Activated naive CD4-positive, alpha-beta T cell treated with anti-CD3 and anti-CD28 coated beads for 36 hours (primary cell): ENCODE measurements at regions of chr3 and their contacts with region 1.

Region 1: DNA sequence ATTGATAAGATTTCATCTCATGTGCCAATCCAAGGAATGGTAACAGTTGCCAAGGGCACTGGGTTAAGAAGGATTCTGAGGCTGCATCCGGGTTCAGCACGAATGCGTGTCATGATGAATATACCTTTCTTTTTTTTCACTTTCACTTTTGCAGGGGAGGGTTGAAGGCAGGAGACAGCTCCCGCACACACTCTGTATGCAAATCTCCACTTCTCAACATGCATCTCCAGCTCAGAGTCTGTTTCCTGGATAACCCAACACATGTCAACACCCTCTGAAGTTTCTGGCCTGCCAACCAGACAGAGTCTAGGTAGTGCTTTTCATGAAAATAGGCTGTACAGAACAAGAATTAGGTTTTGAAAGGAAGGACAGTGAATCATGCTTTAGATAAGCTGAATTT is 21.6 kb downstream of the B4GALT4 start:
- DNase-seq: peak; percentile 78
- H3K4me3 Mint-ChIP-seq: peak overlapping the region; percentile 63
- H3K27ac Mint-ChIP-seq: peak overlapping the region; percentile 94
- H3K4me1 Mint-ChIP-seq: peaks cover 74% of the 10 kb centered on the region
- H3K27me3 Mint-ChIP-seq: no peaks in the 10 kb centered on the region

Region 2: DNA sequence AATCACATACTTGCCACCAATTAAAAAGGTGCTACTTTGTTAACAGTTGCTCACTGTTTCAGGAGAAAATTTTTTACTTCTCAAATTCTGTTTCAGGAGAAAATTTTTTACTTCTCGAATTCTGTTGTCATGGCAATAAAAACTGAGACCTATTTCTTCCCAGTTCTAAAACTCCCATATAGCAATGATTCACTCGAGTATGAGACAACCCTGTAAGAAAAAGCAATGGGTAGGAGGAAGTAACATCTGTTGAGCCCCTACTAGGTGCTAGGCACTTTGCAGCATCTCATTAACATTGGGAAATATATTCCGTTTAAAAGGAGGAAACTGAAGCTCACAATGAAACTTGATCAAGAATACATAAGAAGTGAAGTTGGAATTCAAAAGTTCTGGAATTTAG is 149.3 kb before region 1 on chr3:
- CTCF ChIA-PET with region 1: no interaction called
- intact Hi-C with region 1: no loop called
- DNase-seq: no peak
- H3K4me3 Mint-ChIP-seq: no peak overlapping the region
- H3K27ac Mint-ChIP-seq: no peak overlapping the region
- H3K4me1 Mint-ChIP-seq: no peaks in the 10 kb centered on the region
- H3K27me3 Mint-ChIP-seq: peaks cover 6% of the 10 kb centered on the region

Region 3: DNA sequence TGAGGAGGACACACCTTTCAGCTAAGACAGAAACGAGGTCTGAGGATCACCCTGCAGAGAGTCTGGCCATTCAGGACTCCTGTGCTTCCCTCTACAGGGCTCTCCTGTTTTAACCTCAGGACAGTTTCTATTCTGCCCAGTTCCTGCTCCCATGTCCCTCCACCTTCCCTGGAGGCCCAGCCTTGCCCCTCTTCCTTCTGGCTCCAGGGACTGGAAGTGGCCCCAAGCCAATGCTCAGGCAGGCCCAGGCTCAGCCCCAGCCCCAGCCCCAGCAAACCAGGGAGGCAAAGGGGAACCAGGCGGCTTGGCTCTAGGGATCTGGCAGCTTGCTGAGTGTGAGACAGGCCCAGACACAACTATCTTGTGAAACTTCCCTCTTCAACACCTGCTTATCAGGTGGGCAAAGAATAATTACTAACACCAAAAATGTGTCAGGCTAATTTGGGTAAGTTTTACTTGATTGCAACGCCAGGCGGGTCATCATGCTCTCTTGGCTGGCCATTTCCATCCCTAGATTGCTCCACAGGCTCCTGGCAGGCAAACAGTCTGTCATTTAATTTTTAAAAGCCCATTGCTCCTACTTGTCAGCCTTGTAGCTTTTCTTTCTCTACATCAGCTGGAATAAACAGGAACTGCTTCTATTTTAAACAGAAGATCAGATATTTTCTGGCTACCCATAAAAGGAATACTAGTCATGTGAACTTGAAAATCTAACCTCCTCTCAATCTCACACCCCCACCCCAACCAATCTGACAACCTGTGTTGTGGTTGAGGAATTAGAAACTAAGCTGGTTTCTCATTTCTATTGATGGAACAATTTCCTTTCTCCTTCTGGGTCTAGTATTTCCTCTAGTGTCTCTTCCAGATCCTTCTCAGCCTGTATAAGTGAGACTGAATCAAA is 12.2 kb before region 1 on chr3:
- CTCF ChIA-PET with region 1: interaction called, 3 read pairs
- intact Hi-C with region 1: loop called (anchors 1 kb)
- DNase-seq: peak; percentile 44
- H3K4me3 Mint-ChIP-seq: no peak overlapping the region
- H3K27ac Mint-ChIP-seq: no peak overlapping the region
- H3K4me1 Mint-ChIP-seq: peaks cover 56% of the 10 kb centered on the region
- H3K27me3 Mint-ChIP-seq: no peaks in the 10 kb centered on the region

Region 4: DNA sequence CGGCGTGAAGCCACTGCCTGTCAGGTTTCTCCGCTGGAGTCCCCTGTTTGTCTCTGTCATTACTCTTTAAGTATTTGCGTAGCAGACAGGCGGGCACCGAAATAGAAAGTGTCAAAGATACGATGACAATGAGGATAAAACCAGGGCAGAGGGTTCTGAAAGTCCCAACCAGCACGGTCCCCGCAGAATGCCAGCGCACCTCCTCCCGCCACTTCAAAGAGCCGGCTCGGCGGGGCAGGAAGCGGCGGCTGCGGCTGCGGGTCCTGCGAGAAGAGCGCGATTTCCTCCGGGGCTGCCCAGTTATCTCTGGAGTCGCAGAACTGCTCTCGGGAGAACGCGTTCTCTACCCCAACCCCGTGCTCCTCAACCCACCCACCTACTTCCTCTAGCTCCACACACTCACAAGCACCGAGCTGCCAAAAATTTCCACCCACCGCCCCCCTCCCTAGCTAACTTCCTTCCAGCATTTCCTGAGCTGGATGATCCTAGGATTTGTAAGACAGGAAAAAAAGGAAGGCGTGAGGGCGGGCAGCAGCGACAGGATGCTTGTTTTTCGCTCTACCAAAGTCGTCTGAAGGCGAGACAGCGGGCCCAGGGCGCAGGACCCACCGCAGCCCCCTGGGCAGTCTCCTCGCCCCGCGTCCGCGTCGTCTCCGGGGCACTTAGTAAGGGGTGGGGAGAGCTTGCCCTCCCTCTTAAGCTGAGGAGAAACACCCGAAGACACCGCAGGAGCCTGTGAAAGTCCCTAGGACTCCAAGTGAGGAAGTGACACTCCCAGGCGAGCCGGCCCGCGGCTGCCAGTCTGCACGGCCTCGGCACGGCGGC is 75.0 kb after region 1 on chr3 and contains the start of gene ARHGAP31:
- CTCF ChIA-PET with region 1: no interaction called
- intact Hi-C with region 1: loop called (anchors 1 kb)
- DNase-seq: peak; percentile 94
- H3K4me3 Mint-ChIP-seq: peak within 1 kb of the TSS; percentile 82
- H3K27ac Mint-ChIP-seq: peak within 1 kb of the TSS; percentile 92
- H3K4me1 Mint-ChIP-seq: peaks cover 36% of the 10 kb centered on the region
- H3K27me3 Mint-ChIP-seq: no peaks in the 10 kb centered on the region
- total RNA-seq, gene ARHGAP31: 3.5 to 3.7 TPM

Region 5: DNA sequence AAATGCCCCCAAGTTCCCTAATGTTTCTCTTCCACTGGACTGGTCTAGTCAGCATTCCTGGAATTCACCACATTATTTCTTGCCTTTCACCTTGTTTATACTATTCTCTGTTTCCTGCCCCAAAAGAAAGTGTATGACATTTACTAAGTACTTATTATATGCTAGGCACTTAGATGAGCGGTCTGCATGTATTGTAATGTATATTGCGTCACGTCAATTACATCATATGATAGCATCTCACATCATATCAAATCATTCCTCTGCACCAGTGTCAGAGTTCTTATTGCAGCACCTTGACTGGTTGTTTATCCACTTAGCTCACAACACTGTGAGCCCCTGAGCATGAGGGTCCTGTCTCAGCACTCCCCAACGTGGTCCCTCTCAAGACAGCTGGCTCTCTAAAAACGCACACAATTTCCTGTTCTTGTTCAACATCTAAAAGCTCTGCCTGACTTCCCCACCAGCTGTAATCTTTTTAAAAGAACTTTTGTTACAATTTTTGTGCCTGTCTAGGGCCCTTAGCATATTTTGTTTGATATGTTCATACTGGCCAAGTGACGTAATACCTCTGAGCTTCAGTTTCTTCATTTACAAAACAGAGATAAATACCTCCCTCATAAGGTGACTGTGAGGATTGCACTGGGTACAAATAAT is 133.9 kb after region 1 on chr3:
- CTCF ChIA-PET with region 1: no interaction called
- intact Hi-C with region 1: loop called (anchors 1 kb)
- DNase-seq: peak; percentile 13
- H3K4me3 Mint-ChIP-seq: no peak overlapping the region
- H3K27ac Mint-ChIP-seq: peak overlapping the region; percentile 43
- H3K4me1 Mint-ChIP-seq: peaks cover 30% of the 10 kb centered on the region
- H3K27me3 Mint-ChIP-seq: no peaks in the 10 kb centered on the region

Region 6: DNA sequence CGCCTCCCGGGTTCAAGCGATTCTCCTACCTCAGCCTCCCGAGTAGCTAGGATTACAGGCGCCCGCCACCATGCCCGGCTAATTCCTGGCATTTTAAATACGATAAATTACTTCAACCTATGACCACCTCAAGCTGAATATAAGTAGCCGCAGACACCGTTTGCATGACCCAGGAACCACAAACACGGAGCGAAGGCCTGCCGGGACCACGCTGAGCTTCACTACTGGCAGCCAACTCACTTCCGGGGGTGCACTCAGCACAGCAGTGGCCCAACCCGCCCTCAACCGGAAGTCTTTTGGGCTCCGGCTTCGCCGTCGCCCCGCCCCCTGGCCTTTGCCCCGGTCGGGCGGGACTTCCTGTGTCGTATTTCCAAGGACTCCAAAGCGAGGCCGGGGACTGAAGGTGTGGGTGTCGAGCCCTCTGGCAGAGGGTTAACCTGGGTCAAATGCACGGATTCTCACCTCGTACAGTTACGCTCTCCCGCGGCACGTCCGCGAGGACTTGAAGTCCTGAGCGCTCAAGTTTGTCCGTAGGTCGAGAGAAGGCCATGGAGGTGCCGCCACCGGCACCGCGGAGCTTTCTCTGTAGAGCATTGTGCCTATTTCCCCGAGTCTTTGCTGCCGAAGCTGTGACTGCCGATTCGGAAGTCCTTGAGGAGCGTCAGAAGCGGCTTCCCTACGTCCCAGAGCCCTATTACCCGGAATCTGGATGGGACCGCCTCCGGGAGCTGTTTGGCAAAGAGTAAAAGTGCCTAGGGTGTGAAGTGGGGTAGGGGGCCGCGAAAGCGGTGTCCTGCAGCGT is 279.3 kb after region 1 on chr3 and contains the start of gene TIMMDC1:
- CTCF ChIA-PET with region 1: no interaction called
- intact Hi-C with region 1: loop called (anchors 1 kb)
- DNase-seq: peak; percentile 98
- H3K4me3 Mint-ChIP-seq: peak within 1 kb of the TSS; percentile 99
- H3K27ac Mint-ChIP-seq: peak within 1 kb of the TSS; percentile 94
- H3K4me1 Mint-ChIP-seq: peaks cover 37% of the 10 kb centered on the region
- H3K27me3 Mint-ChIP-seq: no peaks in the 10 kb centered on the region
- total RNA-seq, gene TIMMDC1: 75.6 to 83.8 TPM

Region 7: GRCh38 chr3:119702530-119703157 is 483.6 kb after region 1 on chr3 and contains the start of gene CFAP91:
- CTCF ChIA-PET with region 1: no interaction called
- intact Hi-C with region 1: loop called (anchors 2 kb)
- DNase-seq: peak; percentile 83
- H3K4me3 Mint-ChIP-seq: peak within 1 kb of the TSS; percentile 72
- H3K27ac Mint-ChIP-seq: no peak within 1 kb of the TSS
- H3K4me1 Mint-ChIP-seq: peaks cover 45% of the 10 kb centered on the region
- H3K27me3 Mint-ChIP-seq: peaks cover 2% of the 10 kb centered on the region
- total RNA-seq, gene CFAP91: 0.26 to 0.57 TPM

Region 8: GRCh38 chr3:120742198-120742849 is 1523.3 kb after region 1 on chr3 and contains the starts of genes GTF2E1 and RABL3:
- CTCF ChIA-PET with region 1: no interaction called
- intact Hi-C with region 1: loop called (anchors 10 kb)
- DNase-seq: peak; percentile 98
- H3K4me3 Mint-ChIP-seq: peak within 1 kb of the TSS; percentile 90
- H3K27ac Mint-ChIP-seq: peak within 1 kb of the TSS; percentile 96
- H3K4me1 Mint-ChIP-seq: peaks cover 33% of the 10 kb centered on the region
- H3K27me3 Mint-ChIP-seq: no peaks in the 10 kb centered on the region
- total RNA-seq, gene GTF2E1: 13.2 TPM
- total RNA-seq, gene RABL3: 34.7 to 36.8 TPM